ENCODE measurements at regions of chr10 and their contacts with region 1.

Region 1: DNA sequence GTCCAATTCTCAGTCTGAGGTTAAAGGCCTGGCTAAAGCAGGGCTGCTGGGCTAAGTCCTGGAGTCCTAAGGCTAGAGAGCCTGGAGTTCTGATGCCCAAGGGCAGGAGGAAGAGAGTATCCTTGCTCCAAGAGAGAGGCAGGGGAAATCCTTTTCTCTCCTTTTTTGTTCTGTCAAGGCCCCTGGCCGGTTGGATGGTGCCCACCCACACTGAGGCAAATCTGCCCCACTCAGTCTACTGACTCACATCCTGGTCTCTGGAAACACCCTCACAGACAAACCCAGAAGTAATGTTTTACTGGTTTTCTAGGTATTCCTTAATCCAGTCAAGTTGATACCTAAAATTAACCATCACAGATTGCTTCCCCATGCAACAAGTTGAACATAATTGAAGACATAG is 23.0 kb downstream of the ZNF518A start:
- H3K4me3 ChIP-seq: no peak overlapping the region
- H3K27ac ChIP-seq: no peak overlapping the region
- H3K4me1 ChIP-seq: no peaks in the 10 kb centered on the region
- CTCF ChIP-seq: no peak

Region 2: GRCh38 chr10:95755511-95756004 is 397.5 kb before region 1 on chr10:
- CTCF ChIA-PET with region 1: no interaction called
- POLR2A ChIA-PET with region 1: interaction called, 11 read pairs
- H3K4me3 ChIP-seq: peak overlapping the region; percentile 26
- H3K27ac ChIP-seq: no peak overlapping the region
- H3K4me1 ChIP-seq: peaks cover 6% of the 10 kb centered on the region
- CTCF ChIP-seq: no peak

Region 3: GRCh38 chr10:96138102-96138501 is 15.0 kb before region 1 on chr10:
- CTCF ChIA-PET with region 1: no interaction called
- POLR2A ChIA-PET with region 1: no interaction called
- H3K4me3 ChIP-seq: no peak overlapping the region
- H3K27ac ChIP-seq: no peak overlapping the region
- H3K4me1 ChIP-seq: no peaks in the 10 kb centered on the region
- CTCF ChIP-seq: no peak

Measured in HEK293 (cell line).